Cardiac septum (tissue), 1 donor: ENCODE measurements at regions of chr22 and their contacts with region 1.

Region 1: GRCh38 chr22:36194971-36195370 is 6.6 kb downstream of the APOL4 start:
- DNase-seq: no peak

Region 2: DNA sequence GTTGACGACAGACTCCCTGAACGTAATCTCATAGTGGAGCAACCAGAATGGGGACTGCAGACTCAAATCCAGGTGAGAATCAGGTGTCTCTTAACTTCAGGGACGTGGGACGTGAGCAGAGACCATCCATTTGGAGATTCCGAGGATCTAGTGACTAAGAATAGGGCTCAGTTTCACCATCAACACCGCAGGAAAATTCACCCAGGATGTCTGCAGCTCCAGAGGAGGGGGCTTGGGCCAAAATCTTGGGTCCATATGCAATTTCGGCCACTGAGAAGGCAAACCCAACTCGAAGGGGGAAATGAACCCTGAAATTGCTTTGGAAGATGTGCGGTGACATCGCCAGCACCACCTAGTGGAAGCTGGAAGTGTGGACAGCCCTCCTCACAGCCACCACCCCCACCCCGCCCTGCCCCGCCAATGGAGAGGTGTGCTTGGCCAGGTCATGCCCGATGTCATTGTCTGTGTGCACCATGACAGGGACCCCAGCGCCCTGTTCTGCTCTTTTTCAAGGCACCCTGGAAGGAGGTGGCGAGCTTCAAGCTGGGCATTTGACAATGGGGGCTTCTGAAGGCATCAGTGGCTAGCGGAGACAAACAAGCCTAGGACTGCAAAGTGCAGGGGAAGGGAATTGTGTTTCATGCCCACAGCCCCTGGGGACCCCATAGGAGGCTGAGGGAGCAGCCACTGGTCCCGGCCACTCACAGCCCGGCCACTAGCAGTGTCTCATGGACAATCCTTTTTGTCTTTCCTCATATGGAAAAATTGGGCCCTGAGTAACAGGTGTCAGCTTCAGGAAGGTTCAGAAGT is 82.7 kb after region 1 on chr22:
- intact Hi-C with region 1: loop called (anchors 5 kb)
- DNase-seq: no peak

Region 3: DNA sequence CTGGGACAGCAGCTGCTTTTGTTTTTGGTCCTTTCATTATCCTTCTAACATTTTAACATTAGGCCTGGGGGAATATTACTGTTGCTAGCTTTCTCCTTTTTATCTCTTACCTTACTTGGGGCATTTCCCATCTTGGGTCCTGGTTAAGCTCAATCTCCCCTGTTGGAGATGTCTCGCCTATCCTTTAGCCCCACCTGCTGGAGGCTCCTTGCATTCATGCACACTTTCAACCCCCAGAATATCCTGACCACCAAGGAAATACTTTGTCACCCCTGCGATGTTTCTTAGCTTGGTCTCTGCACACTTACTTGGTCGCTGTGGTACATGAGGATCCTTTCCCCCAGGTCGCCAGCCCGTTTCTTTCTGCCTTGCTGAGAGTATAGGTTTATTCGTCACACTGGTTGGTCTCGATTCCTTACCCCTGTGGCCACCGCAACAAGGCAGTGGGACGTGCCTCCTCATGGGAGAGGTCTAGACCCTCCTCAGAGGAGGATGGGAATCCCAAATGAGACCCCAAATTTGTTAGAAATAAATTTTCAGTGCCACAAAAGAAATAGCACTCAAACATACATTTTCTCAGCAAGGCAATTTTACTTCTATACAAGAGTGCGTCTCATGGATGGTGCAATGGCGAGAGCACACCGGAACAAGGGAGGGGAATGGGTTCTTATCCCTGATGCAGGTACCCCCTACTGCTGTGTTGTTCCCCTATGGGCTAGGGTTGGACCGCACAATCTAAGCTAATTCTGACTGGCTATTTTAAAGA is 291.8 kb after region 1 on chr22:
- intact Hi-C with region 1: loop called (anchors 5 kb)
- DNase-seq: no peak